RWPE1 (cell line): ENCODE measurements at regions of chr12 and their contacts with region 1.

Region 1: DNA sequence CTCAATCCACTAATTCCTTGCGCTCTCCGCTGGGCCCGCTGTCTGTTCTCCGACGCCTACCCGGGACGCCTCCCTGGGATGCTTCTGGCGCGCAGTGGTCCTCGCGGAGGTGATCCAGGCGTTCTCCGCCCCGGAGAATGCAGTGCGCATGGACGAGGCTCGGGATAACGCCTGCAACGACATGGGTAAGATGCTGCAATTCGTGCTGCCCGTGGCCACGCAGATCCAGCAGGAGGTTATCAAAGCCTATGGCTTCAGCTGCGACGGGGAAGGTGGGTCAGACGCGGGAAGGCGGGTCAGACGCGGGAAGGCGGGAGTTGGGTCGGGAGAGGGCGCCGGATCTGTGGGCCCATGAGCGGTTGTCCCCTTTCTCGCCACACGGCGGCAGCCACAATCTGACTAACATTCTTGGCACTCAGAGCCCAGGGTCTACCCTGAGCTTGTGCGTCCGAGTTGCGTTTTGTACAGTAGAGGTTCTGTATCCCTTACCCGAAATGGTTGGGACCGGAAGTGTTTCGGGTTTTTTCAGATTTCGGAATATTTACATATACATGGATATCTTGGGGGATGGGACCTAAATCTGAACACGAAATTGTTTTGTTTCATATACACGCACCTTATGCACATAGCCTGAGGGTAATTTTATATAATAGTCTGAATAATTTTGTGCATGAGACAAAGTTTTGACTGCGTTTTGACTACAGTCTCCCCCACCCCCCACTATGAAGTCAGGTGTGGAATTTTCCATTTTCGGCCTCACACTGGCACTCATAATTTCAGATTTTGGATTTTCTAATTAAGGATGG is 762 bp downstream of the C12orf57 start:
- DNase-seq: peak; percentile 84
- H3K27ac ChIP-seq: peak overlapping the region; percentile 97
- CTCF ChIP-seq: peak; percentile 74

Region 2: GRCh38 chr12:6965026-6965661 is 20.6 kb after region 1 on chr12:
- CTCF ChIA-PET with region 1: interaction called, 14 read pairs
- POLR2A ChIA-PET with region 1: interaction called, 24 read pairs
- DNase-seq: peak; percentile 66
- H3K27ac ChIP-seq: peak overlapping the region; percentile 72
- CTCF ChIP-seq: peak; percentile 69